ENCODE measurements at regions of chr14 and their contacts with region 1.

Region 1: DNA sequence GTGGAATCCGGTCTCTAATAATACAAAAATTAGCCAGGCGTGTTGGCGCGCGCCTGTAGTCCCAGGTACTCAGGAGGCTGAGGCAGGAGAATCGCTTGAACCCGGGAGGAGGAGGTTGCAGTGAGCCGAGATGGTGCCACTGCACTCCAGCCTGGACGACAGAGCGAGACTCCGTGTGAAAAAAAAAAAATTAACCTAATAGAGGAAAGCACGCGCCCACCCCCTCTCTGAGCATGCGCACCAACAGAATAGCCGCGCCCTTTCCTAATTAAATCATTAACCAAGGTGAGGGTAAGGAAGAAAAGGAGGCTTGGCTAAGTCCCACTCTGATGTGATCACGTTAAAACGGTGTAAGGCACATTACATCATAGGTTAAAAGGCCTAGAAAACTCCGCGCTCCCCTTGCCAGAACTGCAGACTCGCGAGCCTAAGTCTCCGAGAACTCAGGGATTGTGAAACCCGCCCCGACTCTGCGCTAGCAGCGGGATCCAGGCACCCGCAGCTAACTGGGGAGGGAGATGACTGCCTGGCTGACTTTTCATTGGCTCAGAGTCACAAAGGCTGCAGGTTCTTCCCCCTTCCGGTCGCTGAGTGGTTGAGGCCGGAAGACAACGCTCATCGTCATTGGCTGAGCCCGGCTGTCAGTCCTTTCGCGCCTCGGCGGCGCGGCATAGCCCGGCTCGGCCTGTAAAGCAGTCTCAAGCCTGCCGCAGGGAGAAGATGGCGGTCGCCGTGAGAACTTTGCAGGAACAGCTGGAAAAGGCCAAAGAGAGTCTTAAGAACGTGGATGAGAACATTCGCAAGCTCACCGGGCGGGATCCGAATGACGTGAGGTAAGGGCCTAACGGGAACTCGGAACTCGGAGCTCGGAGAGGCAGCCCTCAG is at the start of gene PNN:
- DNase-seq: peak; percentile 96
- ATAC-seq: peak; percentile 97
- total RNA-seq, gene PNN: 27.1 to 31.2 TPM

Region 2: DNA sequence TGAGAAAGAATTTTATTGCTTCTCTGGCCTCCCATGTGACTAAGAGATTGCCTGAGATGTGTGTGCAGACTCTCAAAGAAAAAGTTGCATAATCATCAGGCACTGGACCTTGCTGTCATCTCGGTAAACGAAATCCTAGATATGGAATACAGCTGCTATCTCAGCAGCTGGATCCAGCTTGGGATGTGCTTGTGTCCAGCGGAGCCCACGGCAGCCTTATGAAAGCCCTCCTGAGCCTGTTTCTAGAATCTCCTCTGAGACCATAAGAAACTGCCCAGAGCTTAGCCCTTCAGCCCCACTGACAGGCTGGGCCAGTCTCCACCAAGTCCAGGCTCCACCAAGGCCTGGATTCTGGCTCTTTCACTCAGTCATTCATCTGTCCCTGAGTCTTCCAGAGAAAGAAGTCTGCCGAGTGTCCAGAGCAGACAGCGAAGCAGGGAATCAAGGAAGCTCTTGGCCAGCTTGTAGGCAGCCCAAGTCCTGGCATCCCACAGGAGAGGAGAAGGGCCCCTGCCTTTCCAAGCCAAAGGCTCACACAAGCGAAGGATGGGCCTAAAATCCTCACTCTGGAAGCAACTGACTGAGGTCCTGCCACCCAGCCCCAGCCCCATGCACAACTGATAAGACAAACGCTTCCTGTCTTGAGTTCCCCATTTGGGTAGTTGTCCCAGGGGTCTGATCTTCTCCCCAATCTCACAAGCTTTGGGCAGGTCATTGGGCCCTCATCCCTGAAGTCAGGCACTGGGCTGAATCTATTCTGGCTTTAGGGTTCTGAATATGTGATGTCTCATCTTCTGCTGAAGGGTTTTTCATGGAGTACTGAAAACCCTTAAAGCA is 169.5 kb before region 1 on chr14:
- intact Hi-C with region 1: no loop called
- DNase-seq: peak; percentile 34
- ATAC-seq: peak; percentile 59 to 90

Region 3: GRCh38 chr14:39025810-39026627 is 148.8 kb before region 1 on chr14:
- intact Hi-C with region 1: no loop called
- DNase-seq: no peak
- ATAC-seq: no peak

Region 4: DNA sequence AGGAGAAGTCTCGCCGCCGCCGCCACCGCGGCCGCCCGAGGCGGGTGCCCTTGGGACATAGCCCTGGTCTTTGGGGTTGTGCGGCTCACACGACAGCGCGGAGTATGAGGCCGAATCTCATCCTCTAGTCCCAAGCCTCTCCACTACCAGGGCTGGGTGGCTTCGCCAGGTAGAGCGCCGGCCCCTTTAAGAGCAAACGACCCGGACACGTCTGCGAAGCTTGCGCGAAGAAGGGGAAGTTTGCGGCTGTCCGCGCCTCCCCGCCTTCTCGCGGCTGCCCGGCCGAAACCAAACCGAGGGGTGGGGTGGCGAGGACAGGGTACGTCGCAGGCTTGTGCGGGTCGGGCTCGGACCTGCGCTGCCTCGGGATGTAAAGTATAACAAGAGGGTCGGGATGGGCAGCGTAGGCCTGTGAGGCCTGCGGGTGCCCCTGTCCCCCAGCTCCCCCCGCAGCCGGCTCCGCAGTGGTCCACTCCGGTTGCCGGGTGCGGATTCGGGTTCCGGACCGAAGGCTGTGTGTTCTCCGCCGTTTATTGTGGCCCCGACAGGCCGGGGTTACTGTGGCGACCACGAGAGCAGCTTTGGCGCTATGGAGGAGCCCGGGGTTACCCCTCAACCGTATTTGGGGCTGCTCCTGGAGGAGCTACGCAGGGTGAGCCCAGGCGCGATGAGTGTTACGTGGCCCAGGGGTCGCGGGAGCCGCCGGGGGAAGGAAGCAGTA is 92.2 kb after region 1 on chr14:
- intact Hi-C with region 1: loop called in 1 of 2 experiments (anchors 1 kb)
- DNase-seq: peak; percentile 87
- ATAC-seq: peak; percentile 93 to 97

Region 5: GRCh38 chr14:39426605-39427004 is 251.8 kb after region 1 on chr14:
- intact Hi-C with region 1: loop called in 1 of 2 experiments (anchors 5 kb)
- DNase-seq: no peak
- ATAC-seq: no peak

Measured in left cardiac atrium (tissue), 4 donors.